ENCODE measurements at regions of chr2 and their contacts with region 1.

Region 1: DNA sequence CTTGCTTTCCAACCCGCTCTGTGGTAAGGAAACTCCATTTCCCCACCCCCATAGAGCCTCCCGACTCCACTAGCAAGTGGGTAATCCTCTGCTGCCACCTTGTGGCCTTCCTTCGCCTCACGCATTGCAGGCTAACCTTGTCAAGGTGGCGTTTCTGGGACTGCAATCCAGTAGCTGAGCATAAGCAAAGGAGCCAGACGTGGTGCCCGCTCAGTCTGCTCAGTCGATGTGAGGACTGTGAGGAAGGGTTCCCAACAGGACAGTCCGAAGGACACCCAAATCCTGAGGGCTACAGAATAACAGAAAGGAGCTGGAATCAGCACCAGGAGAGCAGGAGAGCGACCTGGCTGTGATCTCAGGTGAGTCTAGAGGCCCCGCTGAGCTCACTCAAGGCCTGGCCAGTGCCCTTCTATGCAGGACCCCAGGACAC is 144.2 kb downstream of the SUCLG1 start:
- DNase-seq: peak; percentile 66
- CTCF ChIP-seq: peak; percentile 92

Region 2: GRCh38 chr2:84022810-84023431 is 292.0 kb before region 1 on chr2:
- CTCF ChIA-PET with region 1: interaction called, 22 read pairs
- POLR2A ChIA-PET with region 1: no interaction called
- DNase-seq: peak; percentile 24
- CTCF ChIP-seq: peak; percentile 50

Region 3: DNA sequence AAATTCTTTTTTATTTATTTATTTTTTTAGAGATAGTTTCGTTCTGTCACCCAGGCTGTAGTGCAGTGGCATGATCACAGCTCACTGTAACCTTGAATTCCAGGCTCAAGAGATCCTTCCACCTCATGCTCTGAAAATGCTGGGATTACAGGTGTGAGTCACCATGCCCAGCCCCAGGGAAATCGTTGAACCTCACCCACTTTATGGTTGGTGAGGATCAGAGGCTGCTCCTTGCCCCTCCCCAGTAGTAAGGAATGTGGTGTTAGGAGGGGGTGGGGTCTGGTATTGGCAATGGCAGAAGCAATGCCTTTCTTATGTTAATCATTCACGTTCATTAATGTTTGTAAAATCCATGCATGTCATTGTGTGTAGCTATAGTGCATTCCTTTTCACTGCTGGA is 17.8 kb before region 1 on chr2:
- CTCF ChIA-PET with region 1: interaction called, 14 read pairs
- POLR2A ChIA-PET with region 1: no interaction called
- DNase-seq: no peak
- CTCF ChIP-seq: no peak

Region 4: GRCh38 chr2:84302513-84303412 is 12.2 kb before region 1 on chr2:
- CTCF ChIA-PET with region 1: interaction called, 36 read pairs
- POLR2A ChIA-PET with region 1: no interaction called
- DNase-seq: peak; percentile 66
- CTCF ChIP-seq: peak; percentile 84

Region 5: GRCh38 chr2:84474175-84474574 is 159.3 kb after region 1 on chr2:
- CTCF ChIA-PET with region 1: no interaction called
- POLR2A ChIA-PET with region 1: no interaction called
- DNase-seq: no peak
- CTCF ChIP-seq: no peak